ENCODE measurements at regions of chr12 and their contacts with region 1.

Region 1: DNA sequence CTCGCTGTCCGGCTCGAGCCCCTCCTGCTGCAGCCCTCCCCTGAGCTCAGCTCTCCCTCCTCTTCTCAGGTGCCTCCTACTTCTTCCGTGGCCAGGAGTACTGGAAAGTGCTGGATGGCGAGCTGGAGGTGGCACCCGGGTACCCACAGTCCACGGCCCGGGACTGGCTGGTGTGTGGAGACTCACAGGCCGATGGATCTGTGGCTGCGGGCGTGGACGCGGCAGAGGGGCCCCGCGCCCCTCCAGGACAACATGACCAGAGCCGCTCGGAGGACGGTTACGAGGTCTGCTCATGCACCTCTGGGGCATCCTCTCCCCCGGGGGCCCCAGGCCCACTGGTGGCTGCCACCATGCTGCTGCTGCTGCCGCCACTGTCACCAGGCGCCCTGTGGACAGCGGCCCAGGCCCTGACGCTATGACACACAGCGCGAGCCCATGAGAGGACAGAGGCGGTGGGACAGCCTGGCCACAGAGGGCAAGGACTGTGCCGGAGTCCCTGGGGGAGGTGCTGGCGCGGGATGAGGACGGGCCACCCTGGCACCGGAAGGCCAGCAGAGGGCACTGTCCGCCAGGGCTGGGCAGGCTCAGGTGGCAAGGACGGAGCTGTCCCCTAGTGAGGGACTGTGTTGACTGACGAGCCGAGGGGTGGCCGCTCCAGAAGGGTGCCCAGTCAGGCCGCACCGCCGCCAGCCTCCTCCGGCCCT is 22.8 kb downstream of the MMP17 start:
- DNase-seq: no peak
- H3K27ac ChIP-seq: no peak overlapping the region
- CTCF ChIP-seq: peak; percentile 64

Region 2: GRCh38 chr12:131323879-131324278 is 527.1 kb before region 1 on chr12:
- CTCF ChIA-PET with region 1: no interaction called
- POLR2A ChIA-PET with region 1: no interaction called
- DNase-seq: no peak
- H3K27ac ChIP-seq: no peak overlapping the region
- CTCF ChIP-seq: no peak

Region 3: GRCh38 chr12:131882779-131883520 is 31.9 kb after region 1 on chr12:
- CTCF ChIA-PET with region 1: no interaction called
- POLR2A ChIA-PET with region 1: no interaction called
- DNase-seq: no peak
- H3K27ac ChIP-seq: peak overlapping the region; percentile 35; the same call in 1 of the 2 replicates
- CTCF ChIP-seq: no peak

Region 4: DNA sequence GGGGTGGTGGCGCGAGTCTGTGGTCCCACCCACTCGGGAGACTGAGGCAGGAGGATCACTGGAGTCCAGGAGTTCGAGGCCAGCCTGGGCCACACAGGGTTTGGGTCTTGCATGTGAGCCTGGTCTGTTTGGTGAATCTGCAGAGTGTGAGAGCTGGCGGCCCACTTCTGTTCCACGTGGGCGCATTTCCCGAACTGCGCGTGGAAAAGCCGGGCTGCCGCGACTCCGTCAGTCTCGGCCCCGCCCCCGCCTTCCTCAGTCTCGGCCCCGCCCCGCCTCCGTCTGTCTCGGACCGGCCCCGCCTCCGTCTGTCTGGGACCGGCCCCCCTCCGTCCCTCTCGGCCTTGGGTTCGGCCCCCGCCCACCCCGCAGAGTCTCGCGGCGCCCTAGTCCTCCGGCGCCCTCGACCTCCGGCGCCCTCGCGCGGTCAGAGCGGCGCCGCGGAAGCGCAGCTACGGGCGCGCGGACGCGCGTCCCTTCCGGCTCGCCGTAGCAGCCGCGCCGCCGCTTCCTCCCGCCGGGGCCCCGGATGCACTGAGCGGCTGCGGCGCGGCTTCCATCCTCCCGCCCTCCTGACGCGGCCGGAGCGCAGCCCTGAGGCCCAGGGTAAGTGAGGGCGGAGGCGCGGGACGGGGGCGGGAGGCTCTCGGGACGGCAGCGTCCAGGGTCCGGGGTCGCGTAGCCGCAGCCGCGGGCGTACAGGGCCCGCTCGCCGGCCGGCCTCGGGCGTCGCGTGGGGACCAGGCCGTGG is 98.6 kb after region 1 on chr12 and contains the start of gene EP400:
- CTCF ChIA-PET with region 1: interaction called, 10 read pairs
- POLR2A ChIA-PET with region 1: no interaction called
- DNase-seq: peak; percentile 94
- H3K27ac ChIP-seq: peak within 1 kb of the TSS; percentile 77
- CTCF ChIP-seq: peak; percentile 70